ENCODE measurements at regions of chr19 and their contacts with region 1.

Region 1: GRCh38 chr19:57947208-57948134 is at the start of gene ZNF256:
- DNase-seq: peak; percentile 92
- H3K4me3 ChIP-seq: peak within 1 kb of the TSS; percentile 24 to 66 (median 53)
- H3K27ac ChIP-seq: no peak within 1 kb of the TSS
- H3K4me1 ChIP-seq: peaks cover 5% of the 10 kb centered on the region
- H3K27me3 ChIP-seq: no peaks in the 10 kb centered on the region
- CTCF ChIP-seq: peak; percentile 55 to 65
- POLR2A ChIP-seq: peak; percentile 50
- total RNA-seq, gene ZNF256: 3.7 and 4.0 TPM in 2 replicates

Region 2: DNA sequence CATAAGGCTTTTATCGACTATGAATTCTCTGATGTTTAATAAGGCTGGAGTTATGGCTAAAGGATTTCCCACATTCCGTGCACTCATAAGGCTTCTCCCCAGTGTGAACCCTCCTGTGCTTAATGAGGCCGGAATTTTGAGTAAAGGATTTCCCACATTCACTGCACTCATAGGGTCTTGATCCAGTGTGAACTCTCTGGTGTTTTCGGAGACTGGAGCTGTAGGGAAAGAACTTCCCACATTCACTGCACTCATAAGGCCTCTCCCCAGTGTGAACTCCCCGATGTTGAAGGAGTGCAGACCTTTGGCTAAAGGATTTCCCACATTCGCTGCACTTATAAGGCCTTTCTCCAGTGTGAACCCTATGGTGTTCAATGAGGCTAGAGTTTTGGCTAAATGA is 245.8 kb before region 1 on chr19:
- CTCF ChIA-PET with region 1: no interaction called
- POLR2A ChIA-PET with region 1: no interaction called
- dilution Hi-C with region 1: no loop called
- intact Hi-C with region 1: no loop called
- DNase-seq: no peak
- H3K4me3 ChIP-seq: no peak overlapping the region
- H3K27ac ChIP-seq: no peak overlapping the region
- H3K4me1 ChIP-seq: no peaks in the 10 kb centered on the region
- H3K27me3 ChIP-seq: no peaks in the 10 kb centered on the region
- CTCF ChIP-seq: no peak
- POLR2A ChIP-seq: no peak

Region 3: GRCh38 chr19:57850553-57851017 is 96.9 kb before region 1 on chr19:
- CTCF ChIA-PET with region 1: no interaction called
- POLR2A ChIA-PET with region 1: no interaction called
- dilution Hi-C with region 1: no loop called
- intact Hi-C with region 1: no loop called
- DNase-seq: peak; percentile 74
- H3K4me3 ChIP-seq: peak overlapping the region; percentile 75 to 94 (median 88)
- H3K27ac ChIP-seq: peak overlapping the region; percentile 75
- H3K4me1 ChIP-seq: peaks cover 7% of the 10 kb centered on the region
- H3K27me3 ChIP-seq: no peaks in the 10 kb centered on the region
- CTCF ChIP-seq: no peak
- POLR2A ChIP-seq: no peak

Region 4: GRCh38 chr19:57914531-57914930 is 32.9 kb before region 1 on chr19:
- CTCF ChIA-PET with region 1: no interaction called
- POLR2A ChIA-PET with region 1: no interaction called
- dilution Hi-C with region 1: no loop called
- intact Hi-C with region 1: loop called (anchors 1 kb)
- DNase-seq: no peak
- H3K4me3 ChIP-seq: no peak overlapping the region
- H3K27ac ChIP-seq: no peak overlapping the region
- H3K4me1 ChIP-seq: peaks cover 5% of the 10 kb centered on the region
- H3K27me3 ChIP-seq: no peaks in the 10 kb centered on the region
- CTCF ChIP-seq: no peak
- POLR2A ChIP-seq: no peak

Region 5: DNA sequence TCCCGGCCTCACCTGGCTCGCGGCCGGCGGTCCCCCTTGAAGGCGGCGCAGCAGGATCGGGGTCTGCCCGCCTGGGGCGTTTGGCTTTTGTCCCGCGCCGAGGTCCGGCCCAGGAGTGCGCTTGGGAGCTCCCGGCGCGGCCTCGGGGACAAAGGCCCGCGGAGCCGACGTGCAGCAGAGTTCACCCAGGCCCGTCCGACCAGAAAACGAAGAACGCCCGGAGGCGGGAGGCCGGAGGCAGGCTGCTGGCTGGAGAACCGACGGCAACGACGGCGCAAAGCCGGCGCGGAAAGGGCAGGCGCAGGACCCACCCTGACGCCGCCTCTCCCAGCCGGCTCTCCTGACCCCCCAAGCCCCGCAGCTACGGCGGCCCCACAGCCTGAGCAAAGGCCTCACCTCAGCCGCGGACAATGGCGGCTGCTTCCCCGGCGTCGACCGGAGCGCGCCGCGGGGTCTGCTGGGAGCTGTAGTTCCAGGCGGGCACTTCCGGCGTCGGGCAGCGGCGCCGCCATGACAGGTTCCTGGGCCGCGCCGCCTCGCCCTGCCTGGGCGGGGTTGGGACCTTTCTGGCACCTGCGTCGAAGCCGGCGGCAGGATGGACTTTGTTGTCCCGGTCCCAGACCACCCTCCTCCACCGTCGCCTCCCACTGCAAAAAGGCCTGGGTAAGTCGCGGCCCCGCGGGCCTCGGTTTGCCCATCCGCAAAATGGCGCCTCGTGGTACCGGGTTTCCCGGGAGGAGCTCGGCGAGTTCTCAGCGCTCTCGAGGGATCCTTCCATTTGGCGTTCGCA is 55.1 kb after region 1 on chr19 and contains the start of gene ZNF606:
- CTCF ChIA-PET with region 1: no interaction called
- POLR2A ChIA-PET with region 1: no interaction called
- dilution Hi-C with region 1: no loop called
- intact Hi-C with region 1: loop called (anchors 1 kb)
- DNase-seq: peak; percentile 89
- H3K4me3 ChIP-seq: peak within 1 kb of the TSS; percentile 39 to 90 (median 75)
- H3K27ac ChIP-seq: peak within 1 kb of the TSS; percentile 24
- H3K4me1 ChIP-seq: peaks cover 5% of the 10 kb centered on the region
- H3K27me3 ChIP-seq: no peaks in the 10 kb centered on the region
- CTCF ChIP-seq: no peak
- POLR2A ChIP-seq: peak; percentile 67
- total RNA-seq, gene ZNF606: 7.8 and 10.8 TPM in 2 replicates